Activated CD4-positive, alpha-beta memory T cell treated with anti-CD3 and anti-CD28 coated beads for 36 hours (primary cell): ENCODE measurements at regions of chr3 and their contacts with region 1.

Region 1: GRCh38 chr3:183265834-183266417 is 12.9 kb downstream of the B3GNT5 start:
- DNase-seq: peak; percentile 71
- H3K4me3 Mint-ChIP-seq: peak overlapping the region; percentile 25
- H3K27ac Mint-ChIP-seq: no peak overlapping the region
- H3K4me1 Mint-ChIP-seq: peaks cover 1% of the 10 kb centered on the region
- H3K27me3 Mint-ChIP-seq: no peaks in the 10 kb centered on the region

Region 2: DNA sequence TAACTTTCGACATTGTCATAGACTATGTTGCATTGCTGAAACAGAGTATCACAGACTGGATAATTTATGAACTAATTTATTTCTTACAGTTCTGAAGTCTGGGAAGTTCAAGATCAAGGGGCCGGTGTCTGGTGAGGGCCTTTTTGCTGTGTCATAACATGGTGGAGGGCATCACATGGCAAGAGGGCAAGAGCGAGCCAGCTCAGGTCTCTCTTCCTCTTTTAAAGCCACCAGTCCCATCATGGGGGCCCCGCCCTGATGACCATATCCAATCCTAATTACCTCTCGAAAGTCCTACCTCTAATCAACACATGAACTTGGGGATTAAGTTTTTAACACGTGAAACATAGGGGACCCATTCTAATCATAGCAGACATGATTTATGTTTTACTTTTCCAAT is 252.1 kb before region 1 on chr3:
- CTCF ChIA-PET with region 1: no interaction called
- POLR2A ChIA-PET with region 1: no interaction called
- intact Hi-C with region 1: no loop called
- DNase-seq: no peak
- H3K4me3 Mint-ChIP-seq: no peak overlapping the region
- H3K27ac Mint-ChIP-seq: no peak overlapping the region
- H3K4me1 Mint-ChIP-seq: no peaks in the 10 kb centered on the region
- H3K27me3 Mint-ChIP-seq: no peaks in the 10 kb centered on the region

Region 3: DNA sequence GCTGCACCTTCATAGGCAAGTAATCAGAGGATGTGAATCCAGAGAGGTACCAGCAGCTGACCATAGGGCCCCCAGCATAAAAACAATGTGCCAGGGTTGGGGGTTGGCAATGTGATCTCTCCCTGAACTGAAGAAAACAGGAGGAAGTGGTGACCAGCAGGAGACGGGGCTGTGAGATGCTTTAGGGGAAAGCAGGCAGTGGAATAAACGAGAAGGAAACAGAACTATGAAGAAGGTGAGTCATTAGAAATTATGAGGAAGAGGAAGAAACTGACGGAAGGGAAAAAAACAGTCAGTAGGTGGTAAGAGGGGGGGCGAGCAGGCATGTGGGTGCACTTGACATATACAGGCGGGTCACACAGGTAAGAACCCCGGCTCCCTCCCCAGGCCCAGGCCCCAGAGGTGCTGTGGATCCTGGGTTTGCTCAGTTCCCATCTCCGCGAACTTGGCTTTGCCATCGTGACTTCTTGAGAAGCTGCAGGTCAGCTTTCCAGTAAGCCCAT is 55.0 kb before region 1 on chr3:
- CTCF ChIA-PET with region 1: interaction called, 3 read pairs
- POLR2A ChIA-PET with region 1: interaction called, 4 read pairs
- intact Hi-C with region 1: loop called (anchors 2 kb)
- DNase-seq: peak; percentile 56
- H3K4me3 Mint-ChIP-seq: no peak overlapping the region
- H3K27ac Mint-ChIP-seq: peak overlapping the region; percentile 67
- H3K4me1 Mint-ChIP-seq: peaks cover 46% of the 10 kb centered on the region
- H3K27me3 Mint-ChIP-seq: no peaks in the 10 kb centered on the region

Region 4: DNA sequence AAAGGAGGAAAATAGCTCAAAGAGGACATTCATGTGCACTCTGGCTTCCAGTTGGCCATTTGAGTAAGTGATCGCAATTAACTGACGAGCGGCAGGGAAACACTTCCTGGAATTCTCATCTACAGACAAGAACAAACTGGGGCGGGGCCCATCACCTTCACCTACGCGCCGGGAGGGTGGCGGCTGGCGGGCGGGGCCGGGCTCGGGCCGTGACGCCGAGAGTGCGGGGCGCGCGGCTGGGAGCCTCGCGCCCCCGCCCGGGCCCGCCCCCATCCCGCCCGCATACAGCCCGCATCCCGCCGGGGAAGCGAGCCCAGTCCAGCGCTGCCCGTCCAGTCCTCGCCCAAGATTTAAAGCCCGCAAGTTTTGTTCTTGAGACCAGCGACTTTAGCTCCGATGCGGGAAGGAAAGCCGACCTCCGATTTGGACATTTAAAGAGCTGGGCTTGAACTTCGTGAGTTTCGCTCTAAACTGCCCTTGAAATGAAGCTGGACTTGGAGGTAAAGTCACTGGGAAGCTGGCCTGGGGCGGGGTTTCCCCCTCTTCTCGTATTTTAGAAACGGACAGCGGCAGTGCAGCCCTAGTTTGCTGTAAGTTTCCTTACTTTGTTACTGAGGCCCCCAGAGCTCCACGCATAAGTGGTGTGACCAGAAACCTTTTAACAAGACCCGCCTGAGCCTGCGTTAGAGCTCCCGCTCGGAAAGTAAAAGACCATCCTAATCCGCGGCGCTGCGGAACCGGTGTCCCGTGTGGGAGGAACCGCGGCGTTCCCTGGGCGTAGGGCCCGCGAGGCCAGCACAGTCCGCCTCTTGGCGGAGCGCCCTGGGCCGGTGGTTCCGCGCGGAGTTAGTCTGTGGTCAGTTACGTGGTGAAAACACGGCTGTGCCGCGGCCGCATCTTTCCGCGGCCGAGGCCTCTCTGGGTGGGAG is 12.7 kb before region 1 on chr3 and contains the start of gene B3GNT5:
- CTCF ChIA-PET with region 1: interaction called, 5 read pairs
- POLR2A ChIA-PET with region 1: interaction called, 6 read pairs
- intact Hi-C with region 1: loop called (anchors 1 kb)
- DNase-seq: peak; percentile 60
- H3K4me3 Mint-ChIP-seq: peak within 1 kb of the TSS; percentile 76
- H3K27ac Mint-ChIP-seq: peak within 1 kb of the TSS; percentile 34
- H3K4me1 Mint-ChIP-seq: peaks cover 12% of the 10 kb centered on the region
- H3K27me3 Mint-ChIP-seq: peaks cover 18% of the 10 kb centered on the region
- total RNA-seq, gene B3GNT5: 12.7 to 12.9 TPM

Region 5: GRCh38 chr3:183328823-183329222 is 62.9 kb after region 1 on chr3:
- CTCF ChIA-PET with region 1: no interaction called
- POLR2A ChIA-PET with region 1: no interaction called
- intact Hi-C with region 1: no loop called
- DNase-seq: no peak
- H3K4me3 Mint-ChIP-seq: no peak overlapping the region
- H3K27ac Mint-ChIP-seq: no peak overlapping the region
- H3K4me1 Mint-ChIP-seq: peaks cover 10% of the 10 kb centered on the region
- H3K27me3 Mint-ChIP-seq: no peaks in the 10 kb centered on the region

Region 6: GRCh38 chr3:183369117-183369516 is 103.2 kb after region 1 on chr3:
- CTCF ChIA-PET with region 1: no interaction called
- POLR2A ChIA-PET with region 1: no interaction called
- intact Hi-C with region 1: loop called (anchors 2 kb)
- DNase-seq: no peak
- H3K4me3 Mint-ChIP-seq: no peak overlapping the region
- H3K27ac Mint-ChIP-seq: no peak overlapping the region
- H3K4me1 Mint-ChIP-seq: peaks cover 31% of the 10 kb centered on the region
- H3K27me3 Mint-ChIP-seq: no peaks in the 10 kb centered on the region

Region 7: DNA sequence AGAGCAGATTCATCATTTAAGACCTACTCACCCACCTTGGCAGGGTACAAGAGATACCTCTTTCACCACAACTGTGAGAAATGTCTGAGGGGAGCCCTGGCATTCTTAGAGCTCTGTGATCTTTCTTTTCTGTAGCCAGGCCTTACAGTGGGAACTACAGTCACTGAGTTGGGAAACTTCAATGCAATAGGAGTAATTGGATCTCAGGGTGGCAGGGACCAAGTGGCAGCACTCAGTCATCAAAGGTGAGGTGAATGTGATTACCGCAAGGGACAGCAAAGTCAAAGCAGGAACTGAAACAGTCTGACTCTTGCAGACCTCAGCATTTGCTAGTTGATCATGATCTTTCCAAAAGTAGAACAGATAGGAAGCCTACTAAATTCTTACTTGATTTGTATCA is 169.7 kb after region 1 on chr3:
- CTCF ChIA-PET with region 1: no interaction called
- POLR2A ChIA-PET with region 1: no interaction called
- intact Hi-C with region 1: loop called (anchors 2 kb)
- DNase-seq: peak; percentile 74
- H3K4me3 Mint-ChIP-seq: no peak overlapping the region
- H3K27ac Mint-ChIP-seq: peak overlapping the region; percentile 69
- H3K4me1 Mint-ChIP-seq: peaks cover 58% of the 10 kb centered on the region
- H3K27me3 Mint-ChIP-seq: no peaks in the 10 kb centered on the region